Left cardiac atrium (tissue), 4 donors: ENCODE measurements at regions of chr2 and their contacts with region 1.

Region 1: DNA sequence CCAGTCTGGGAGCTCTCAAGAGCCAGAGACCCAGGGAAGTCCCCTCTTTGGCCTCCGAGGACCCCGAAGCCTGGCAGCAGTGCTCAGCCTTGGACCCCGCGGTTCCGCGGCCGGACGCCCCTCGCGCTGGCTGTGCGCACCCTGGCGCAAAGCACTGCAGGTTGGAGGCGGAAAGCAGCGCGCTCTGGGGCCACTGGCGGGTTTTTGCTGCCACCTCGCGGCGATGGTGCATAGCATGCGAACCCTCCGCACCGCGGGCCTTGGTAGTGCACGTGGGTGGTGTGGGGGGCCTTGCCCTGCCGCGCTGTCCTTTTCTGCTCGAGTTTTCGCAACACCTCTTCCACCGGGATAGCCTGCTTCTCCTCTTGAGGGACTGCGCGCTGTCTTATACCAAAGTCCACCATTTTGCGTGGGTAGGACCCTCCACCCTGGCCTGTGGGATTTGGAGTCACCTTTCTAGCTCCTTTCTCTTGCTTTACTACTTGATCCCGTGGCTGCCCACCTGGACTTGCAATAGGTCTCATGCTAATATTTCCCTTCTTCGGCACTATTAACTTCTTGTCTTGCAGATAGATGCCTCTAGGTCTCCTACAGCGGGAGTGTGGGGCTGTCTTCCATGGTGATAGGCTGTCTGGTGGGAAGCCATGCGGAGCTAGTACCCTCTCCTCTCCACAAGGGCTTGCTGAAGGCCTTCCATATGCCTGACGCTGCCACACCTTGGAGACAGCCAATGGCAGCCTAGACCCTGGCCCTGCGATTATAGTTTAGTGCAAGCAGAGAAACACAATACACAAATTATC is 14.3 kb downstream of the SIX3 start:
- DNase-seq: peak; percentile 72
- ATAC-seq: peak; percentile 83 to 85

Region 2: DNA sequence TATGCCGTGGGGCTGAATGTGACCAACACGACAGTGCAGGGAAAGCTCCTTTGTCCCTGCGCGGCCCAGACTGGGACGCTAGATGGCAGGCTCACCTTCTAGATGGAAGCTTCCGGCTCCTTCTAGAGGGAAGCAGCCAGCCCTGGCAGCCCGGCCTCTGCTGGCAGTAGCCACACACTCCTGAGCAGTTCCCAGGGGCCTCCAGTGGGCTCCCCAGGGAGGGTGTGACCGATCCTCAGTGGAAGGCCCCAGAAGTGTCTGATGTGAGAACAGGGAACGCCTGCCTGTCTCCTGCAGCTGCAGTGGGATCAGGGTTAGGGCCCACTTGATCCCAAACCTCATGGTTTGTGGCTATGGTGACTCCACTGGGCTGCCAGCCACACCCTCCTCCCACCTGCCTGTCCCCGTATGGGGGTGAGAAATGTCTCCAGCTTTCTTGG is 911.5 kb before region 1 on chr2:
- intact Hi-C with region 1: loop called in 1 of 2 experiments (anchors 2 kb)
- DNase-seq: peak; percentile 85
- ATAC-seq: peak; percentile 97 to 98

Region 3: GRCh38 chr2:44244129-44244871 is 711.5 kb before region 1 on chr2:
- intact Hi-C with region 1: loop called in 1 of 2 experiments (anchors 5 kb)
- DNase-seq: peak; percentile 59
- ATAC-seq: peak; percentile 68 to 76

Region 4: GRCh38 chr2:44392338-44392943 is 563.4 kb before region 1 on chr2:
- intact Hi-C with region 1: loop called in 1 of 2 experiments (anchors 2 kb)
- DNase-seq: peak; percentile 45
- ATAC-seq: no peak

Region 5: DNA sequence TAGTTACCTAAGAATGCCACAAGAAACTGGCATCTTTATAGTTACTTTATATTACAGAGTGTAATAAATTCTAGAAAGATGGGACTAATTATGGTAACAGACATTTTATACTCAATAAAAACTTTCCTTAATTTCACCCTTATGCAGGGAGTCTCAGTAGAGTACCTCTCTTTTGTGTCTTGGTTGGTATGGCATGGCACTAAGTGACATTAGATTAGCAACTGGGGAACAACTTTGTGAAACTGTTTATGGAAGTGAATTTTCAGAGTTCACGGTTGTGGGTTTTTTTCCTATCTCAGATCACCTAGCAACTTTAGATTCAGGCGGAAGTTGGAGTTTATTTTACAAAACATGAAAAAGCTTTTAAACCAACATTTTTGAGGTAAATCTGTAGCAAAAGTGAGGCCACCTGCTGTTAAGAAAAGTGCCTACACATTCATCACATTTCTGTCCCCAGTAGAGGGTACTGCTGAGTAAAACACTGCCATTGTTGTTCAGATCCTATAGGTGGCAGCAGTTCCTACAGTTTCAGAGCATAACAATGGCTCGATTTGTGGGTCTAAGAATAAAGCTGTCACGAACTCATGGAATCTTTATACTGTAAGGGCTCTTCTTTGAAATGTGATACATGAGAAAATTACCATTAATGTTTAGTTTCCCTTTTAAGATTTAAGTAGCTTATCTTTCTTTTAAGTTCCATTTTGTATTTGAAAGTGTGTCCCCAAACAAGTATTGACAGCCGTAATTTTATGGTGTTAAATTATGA is 476.5 kb before region 1 on chr2:
- intact Hi-C with region 1: loop called (anchors 2 to 5 kb)
- DNase-seq: no peak
- ATAC-seq: peak; percentile 89 to 92

Region 6: DNA sequence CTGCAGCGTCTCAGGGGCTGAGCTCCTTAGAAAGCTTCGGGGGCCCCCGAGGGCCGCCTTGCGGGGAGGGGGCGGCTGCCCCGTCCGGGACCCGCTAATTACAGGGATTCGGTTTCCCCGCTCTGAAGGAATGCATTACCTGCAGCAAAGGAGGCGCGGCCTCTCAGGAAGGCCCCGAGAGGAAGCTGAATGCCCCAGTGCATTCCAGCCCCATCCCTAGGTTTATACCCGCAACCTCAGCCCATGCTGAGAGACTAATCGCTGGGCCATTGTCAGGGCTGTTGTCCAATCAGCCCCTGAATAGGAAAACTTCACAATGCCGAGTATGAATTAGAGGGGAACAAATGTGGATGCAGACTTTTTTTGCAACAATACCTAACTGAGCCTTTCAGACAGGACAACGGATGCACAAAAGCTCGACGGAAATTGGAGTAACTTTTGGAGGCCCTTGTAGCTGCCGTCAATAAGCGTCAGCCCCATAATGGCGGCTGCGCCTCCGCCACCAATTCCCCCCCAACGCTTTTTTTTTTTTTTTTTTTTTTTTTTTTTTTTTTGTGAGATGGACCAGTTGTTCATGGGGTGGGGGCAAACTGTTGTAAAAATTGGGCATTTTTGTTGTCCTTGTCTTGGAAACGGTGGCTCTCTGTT is 152.9 kb before region 1 on chr2:
- intact Hi-C with region 1: no loop called
- DNase-seq: no peak
- ATAC-seq: no peak

Region 7: GRCh38 chr2:44859337-44859736 is 96.5 kb before region 1 on chr2:
- intact Hi-C with region 1: no loop called
- DNase-seq: no peak
- ATAC-seq: no peak